Esophagus squamous epithelium (tissue), 5 donors: ENCODE measurements at regions of chr6 and their contacts with region 1.

Region 1: GRCh38 chr6:135535989-135536414 is 38.5 kb upstream of the AHI1 start:
- DNase-seq: no peak
- H3K4me3 ChIP-seq: no peak overlapping the region
- H3K27ac ChIP-seq: no peak overlapping the region
- H3K4me1 ChIP-seq: peaks cover 0 to 7% (median 3%) of the 10 kb centered on the region in 3 donors
- H3K27me3 ChIP-seq: peaks cover 0 to under 1% (median 0%) of the 10 kb centered on the region in 4 donors
- CTCF ChIP-seq: peak in 5 of 6 experiments; percentile 42 to 68 (median 63)
- POLR2A ChIP-seq: no peak

Region 2: DNA sequence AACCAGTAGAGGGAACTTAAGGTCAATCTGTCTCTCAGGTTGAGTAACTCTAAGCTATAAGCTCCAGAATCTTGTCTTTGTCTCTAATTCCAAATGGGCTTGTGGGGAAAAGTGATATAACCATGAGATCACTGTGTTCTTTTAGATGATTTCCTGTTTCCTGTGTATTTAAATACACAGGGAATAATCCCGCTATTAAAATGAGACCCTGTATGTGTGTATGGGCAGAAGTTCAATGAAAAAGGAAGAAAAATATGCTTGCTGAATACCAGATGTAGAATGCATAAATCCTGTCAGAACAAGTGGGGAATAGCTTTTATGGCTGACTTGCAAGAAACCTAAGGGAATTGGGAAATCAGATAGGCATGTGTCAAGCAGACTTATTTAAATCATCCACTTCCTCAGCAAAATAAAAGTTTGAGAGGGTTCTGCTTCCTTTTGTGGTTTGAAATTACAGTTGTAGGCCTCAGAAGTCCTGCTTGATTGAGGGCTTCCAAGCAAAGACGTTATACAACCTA is 150.8 kb after region 1 on chr6:
- intact Hi-C with region 1: no loop called
- DNase-seq: no peak
- H3K4me3 ChIP-seq: no peak overlapping the region
- H3K27ac ChIP-seq: peak overlapping the region in 3 of 4 donors; percentile 1 to 37 (median 13)
- H3K4me1 ChIP-seq: peaks cover 0 to 4% (median 0%) of the 10 kb centered on the region in 3 donors
- H3K27me3 ChIP-seq: no peaks in the 10 kb centered on the region
- CTCF ChIP-seq: no peak
- POLR2A ChIP-seq: no peak

Region 3: GRCh38 chr6:136226027-136226673 is 690.1 kb after region 1 on chr6:
- intact Hi-C with region 1: loop called (anchors 5 kb)
- DNase-seq: no peak
- H3K4me3 ChIP-seq: peak overlapping the region; percentile 9 to 56 (median 29)
- H3K27ac ChIP-seq: no peak overlapping the region
- H3K4me1 ChIP-seq: peaks cover 0 to 13% (median 0%) of the 10 kb centered on the region in 3 donors
- H3K27me3 ChIP-seq: no peaks in the 10 kb centered on the region
- CTCF ChIP-seq: peak; percentile 95 to 100 (median 100)
- POLR2A ChIP-seq: no peak